Activated T-helper 1 cell treated with anti-CD3 and anti-CD28 coated beads, Interleukin-12 subunit alpha, Interleukin-12 subunit beta, Interleukin-2, Interleukin-4 antibody, amounts not matched to agents 30 ng/mL and 10 ng/mL and 1 ng/mL, durations not matched to agents 14 hours and 24 hours and 36 hours (primary cell): ENCODE measurements at regions of chr20 and their contacts with region 1.

Region 1: DNA sequence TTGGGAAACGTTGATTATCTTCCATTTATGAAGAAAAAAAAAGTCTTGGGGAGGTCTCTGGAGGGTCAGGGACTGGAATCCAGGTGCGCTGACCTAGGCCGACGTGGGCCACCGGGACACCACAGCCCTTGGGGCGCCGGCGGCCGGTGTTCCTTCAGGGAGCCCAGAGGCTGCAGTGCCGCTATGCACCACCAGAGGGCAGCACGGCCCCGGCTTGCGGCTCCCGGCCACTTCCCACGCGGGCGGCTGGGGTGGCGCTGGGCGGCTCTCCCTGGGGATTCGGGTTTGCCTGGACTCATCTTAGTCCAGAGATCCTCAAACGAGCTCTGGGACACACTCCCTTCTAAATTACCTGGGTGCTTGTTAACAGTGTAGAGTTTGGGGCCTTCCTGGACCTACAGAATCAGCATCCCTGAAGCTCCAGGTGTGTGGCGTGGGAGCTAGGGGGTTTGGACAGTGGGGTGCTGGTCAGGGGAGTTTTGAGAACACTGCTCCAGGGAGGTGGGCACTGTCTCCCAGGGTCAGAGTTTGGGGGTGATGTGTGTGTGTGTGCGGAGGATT is 23.0 kb upstream of the GTSF1L start:
- DNase-seq: peak; percentile 75
- H3K4me3 Mint-ChIP-seq: no peak overlapping the region
- H3K27ac Mint-ChIP-seq: peak overlapping the region; percentile 87
- H3K4me1 Mint-ChIP-seq: peaks cover 43% of the 10 kb centered on the region
- H3K27me3 Mint-ChIP-seq: no peaks in the 10 kb centered on the region

Region 2: DNA sequence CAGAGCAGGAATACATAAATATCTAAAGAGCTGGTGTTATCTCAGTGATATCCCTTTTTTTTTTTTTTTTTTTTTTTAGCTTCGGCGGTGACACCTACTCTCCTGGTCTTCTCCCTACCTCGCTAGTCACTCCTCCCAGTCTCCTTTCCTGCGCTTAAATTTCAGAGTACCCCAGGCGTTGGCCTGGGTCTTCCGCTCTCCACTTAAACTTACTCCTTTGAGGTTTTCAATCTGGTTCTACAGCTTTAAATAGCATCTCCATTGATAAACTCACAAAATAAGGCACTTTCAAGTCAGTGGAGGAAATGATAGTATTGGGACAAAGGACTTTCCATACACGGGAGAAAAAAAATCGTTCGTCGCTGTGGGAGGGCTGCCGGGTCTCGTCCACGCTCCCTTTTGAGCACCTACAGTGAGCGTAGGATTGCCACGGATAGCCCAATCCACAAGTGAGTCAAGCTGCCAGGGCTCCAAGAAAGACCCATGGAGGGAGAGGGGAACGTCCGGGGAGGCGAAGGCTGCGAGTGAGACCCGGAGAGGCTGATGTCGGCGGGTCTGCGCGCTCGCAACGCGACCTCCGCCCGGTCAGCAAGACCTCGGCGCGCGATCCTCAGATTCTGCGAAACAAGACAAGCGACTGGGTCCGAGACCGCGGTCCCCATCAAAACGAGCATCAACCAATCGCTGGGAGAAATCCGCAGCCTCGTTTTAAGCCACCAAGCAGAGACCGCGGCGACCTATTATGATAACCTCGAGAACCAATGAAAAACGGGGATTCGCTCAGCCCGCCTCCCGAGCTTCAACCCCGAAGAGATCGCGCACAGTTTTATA is 292.8 kb before region 1 on chr20:
- intact Hi-C with region 1: loop called (anchors 1 kb)
- DNase-seq: peak; percentile 83
- H3K4me3 Mint-ChIP-seq: peak overlapping the region; percentile 88
- H3K27ac Mint-ChIP-seq: peak overlapping the region; percentile 100
- H3K4me1 Mint-ChIP-seq: peaks cover 34% of the 10 kb centered on the region
- H3K27me3 Mint-ChIP-seq: peaks cover 17% of the 10 kb centered on the region

Region 3: GRCh38 chr20:43721429-43722152 is 28.2 kb before region 1 on chr20:
- intact Hi-C with region 1: loop called (anchors 1 kb)
- DNase-seq: no peak
- H3K4me3 Mint-ChIP-seq: peak overlapping the region; percentile 65
- H3K27ac Mint-ChIP-seq: peak overlapping the region; percentile 85
- H3K4me1 Mint-ChIP-seq: peaks cover 34% of the 10 kb centered on the region
- H3K27me3 Mint-ChIP-seq: no peaks in the 10 kb centered on the region

Region 4: DNA sequence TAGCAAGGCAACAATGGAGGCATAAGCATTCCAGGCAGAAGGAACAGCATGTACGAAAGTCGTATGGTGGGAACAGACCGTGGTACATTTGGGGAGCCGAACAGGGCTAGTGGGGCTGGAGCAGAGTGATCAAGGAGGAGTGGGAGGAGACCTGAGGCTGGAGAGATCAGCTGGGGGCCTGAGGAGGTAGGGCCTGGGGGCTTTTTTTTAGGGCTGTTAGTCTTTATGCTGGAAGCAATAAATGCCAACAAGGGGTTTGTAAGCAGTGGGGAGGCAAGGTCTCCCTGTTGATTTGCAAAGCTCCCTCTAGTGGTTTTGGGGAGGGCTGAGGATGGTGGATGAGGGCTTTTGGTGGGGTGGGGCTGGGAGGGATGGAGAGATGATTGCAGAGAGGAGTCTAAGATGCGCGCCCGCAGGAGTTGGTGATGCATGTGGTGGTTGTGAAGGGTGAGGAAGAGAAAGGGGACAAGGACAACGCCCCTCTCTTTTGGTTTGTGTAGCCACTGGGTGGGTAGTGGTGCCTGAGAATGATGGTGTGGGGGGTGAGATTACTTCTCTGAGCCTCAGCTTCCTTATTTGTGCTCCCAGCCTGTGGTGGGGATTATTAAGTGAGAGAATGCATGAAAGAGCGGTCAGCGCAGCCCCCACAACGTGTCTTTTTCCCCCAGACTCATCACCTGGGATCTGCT is 90.7 kb after region 1 on chr20:
- intact Hi-C with region 1: loop called (anchors 1 kb)
- DNase-seq: peak; percentile 17
- H3K4me3 Mint-ChIP-seq: no peak overlapping the region
- H3K27ac Mint-ChIP-seq: peak overlapping the region; percentile 85
- H3K4me1 Mint-ChIP-seq: peaks cover 59% of the 10 kb centered on the region
- H3K27me3 Mint-ChIP-seq: peaks cover 7% of the 10 kb centered on the region

Region 5: DNA sequence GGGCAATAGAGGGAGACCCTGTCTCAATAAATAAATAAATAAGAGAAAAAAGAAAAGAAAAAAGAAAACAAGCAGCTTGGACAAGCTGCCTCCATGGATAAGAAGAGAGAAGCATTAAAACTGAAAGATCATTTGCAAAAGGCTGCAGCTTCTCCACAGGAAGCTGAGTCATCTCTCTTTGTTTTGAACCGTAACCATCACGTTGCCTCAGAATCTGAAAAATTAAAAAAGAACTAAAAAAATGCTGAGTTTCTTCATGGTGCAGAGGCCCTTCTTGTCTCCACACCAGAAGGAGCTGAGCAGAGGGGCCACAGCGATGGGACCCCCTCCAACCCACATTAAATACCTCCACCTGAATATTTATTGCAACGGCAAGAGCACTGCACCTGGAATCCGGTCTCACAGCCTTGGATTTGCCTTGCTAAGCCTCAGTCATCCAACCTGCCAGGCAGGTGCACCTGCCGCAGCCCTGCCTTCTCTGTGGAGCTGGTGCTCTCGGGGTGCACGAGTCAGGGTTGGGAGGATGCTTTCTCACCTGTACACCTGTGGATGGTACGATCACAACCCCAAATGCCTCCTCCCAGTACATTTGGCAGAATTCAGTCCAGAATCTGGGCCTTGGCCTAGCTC is 193.0 kb after region 1 on chr20:
- intact Hi-C with region 1: loop called (anchors 1 kb)
- DNase-seq: peak; percentile 33
- H3K4me3 Mint-ChIP-seq: peak overlapping the region; percentile 70
- H3K27ac Mint-ChIP-seq: peak overlapping the region; percentile 88
- H3K4me1 Mint-ChIP-seq: peaks cover 75% of the 10 kb centered on the region
- H3K27me3 Mint-ChIP-seq: peaks cover 14% of the 10 kb centered on the region

Region 6: GRCh38 chr20:44069203-44070011 is 319.6 kb after region 1 on chr20:
- intact Hi-C with region 1: loop called (anchors 1 kb)
- DNase-seq: peak; percentile 65
- H3K4me3 Mint-ChIP-seq: peak overlapping the region; percentile 52
- H3K27ac Mint-ChIP-seq: peak overlapping the region; percentile 87
- H3K4me1 Mint-ChIP-seq: peaks cover 69% of the 10 kb centered on the region
- H3K27me3 Mint-ChIP-seq: peaks cover 4% of the 10 kb centered on the region